ENCODE measurements at regions of chr12 and their contacts with region 1.

Region 1: DNA sequence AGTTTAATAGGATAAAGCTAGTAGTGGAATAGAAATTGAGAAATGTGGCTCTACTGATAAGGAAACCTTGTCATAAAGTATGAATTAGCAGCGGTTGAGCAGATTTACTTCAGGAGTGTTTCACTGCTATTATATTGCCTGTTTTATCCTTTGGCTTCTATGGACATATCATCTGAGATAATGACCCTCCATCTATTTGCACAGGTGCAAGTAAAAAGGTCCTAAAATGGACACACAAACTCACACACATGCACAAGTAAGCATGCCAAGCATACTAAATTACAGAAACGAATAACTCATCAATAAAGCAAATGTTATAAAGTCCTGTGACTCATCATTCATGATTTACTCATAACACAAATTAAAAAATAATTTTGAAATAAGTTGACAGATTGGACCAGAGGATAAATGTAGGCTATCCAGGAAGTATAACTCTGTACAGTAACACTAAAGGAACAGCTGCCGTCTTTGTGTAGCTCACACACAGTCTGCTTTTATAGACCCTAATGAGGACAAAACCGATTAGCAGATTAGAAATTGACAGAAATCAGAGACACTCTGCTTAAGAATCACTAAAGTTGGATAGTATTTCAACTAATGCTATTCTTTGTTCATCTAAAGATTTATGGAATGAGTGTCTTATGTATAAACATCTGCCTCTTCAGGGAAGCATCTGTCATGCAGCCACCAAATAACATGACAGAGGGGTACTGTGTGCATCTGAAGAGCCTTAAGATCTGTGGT is 73.9 kb downstream of the SYT1 start:
- DNase-seq: peak; percentile 55
- ATAC-seq: peak; percentile 90
- H3K4me3 ChIP-seq: no peak overlapping the region
- H3K27ac ChIP-seq: no peak overlapping the region
- H3K4me1 ChIP-seq: peaks cover 12% of the 10 kb centered on the region
- H3K27me3 ChIP-seq: no peaks in the 10 kb centered on the region
- CTCF ChIP-seq: no peak

Region 2: DNA sequence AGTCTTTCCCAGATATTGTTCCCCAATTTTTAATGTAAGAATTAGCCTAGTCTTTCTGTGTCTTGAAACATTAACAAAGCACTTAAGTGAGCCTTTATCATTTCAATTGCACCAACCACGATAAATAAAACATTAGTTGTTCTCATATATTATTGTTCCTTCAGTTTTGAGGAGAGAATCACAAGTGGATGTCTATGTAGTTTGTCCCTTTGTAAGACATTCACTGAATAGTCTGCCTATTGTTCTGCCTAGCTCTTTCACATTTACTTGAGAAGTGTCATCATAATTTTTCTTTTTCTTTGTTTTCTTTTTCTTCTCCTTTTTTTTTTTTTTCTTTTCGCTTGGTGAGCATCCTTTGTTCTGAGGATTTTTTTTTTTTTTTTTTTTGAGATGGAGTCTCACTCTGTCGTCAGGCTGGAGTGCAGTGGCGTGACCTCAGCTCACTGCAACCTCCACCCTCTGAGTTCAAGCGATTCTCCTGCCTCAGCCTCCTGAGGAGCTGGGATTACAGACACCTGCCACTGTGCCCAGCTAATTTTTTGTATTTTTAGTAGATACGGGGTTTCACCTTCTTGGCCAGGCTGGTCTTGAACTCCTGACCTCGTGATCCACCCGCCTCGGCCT is 55.8 kb after region 1 on chr12:
- CTCF ChIA-PET with region 1: no interaction called
- POLR2A ChIA-PET with region 1: no interaction called
- intact Hi-C with region 1: loop called (anchors 2 kb)
- DNase-seq: no peak
- ATAC-seq: no peak
- H3K4me3 ChIP-seq: no peak overlapping the region
- H3K27ac ChIP-seq: no peak overlapping the region
- H3K4me1 ChIP-seq: no peaks in the 10 kb centered on the region
- H3K27me3 ChIP-seq: no peaks in the 10 kb centered on the region
- CTCF ChIP-seq: no peak

Region 3: GRCh38 chr12:79033788-79034187 is 95.3 kb after region 1 on chr12:
- CTCF ChIA-PET with region 1: no interaction called
- POLR2A ChIA-PET with region 1: no interaction called
- intact Hi-C with region 1: no loop called
- DNase-seq: no peak
- ATAC-seq: no peak
- H3K4me3 ChIP-seq: no peak overlapping the region
- H3K27ac ChIP-seq: no peak overlapping the region
- H3K4me1 ChIP-seq: no peaks in the 10 kb centered on the region
- H3K27me3 ChIP-seq: no peaks in the 10 kb centered on the region
- CTCF ChIP-seq: no peak

Measured in PC-3 (cell line).